BJ (cell line): ENCODE measurements at regions of chr19 and their contacts with region 1.

Region 1: GRCh38 chr19:46030812-46031550 is 8.1 kb upstream of the PGLYRP1 start:
- DNase-seq: no peak
- H3K4me3 ChIP-seq: no peak overlapping the region
- H3K27me3 ChIP-seq: peaks cover 6% of the 10 kb centered on the region; the same call in 1 of the 2 replicates
- CTCF ChIP-seq: no peak

Region 2: GRCh38 chr19:46056536-46056935 is 25.6 kb after region 1 on chr19:
- CTCF ChIA-PET with region 1: interaction called, 26 read pairs
- POLR2A ChIA-PET with region 1: no interaction called
- DNase-seq: no peak
- H3K4me3 ChIP-seq: no peak overlapping the region
- H3K27me3 ChIP-seq: peaks cover 7% of the 10 kb centered on the region
- CTCF ChIP-seq: no peak

Region 3: DNA sequence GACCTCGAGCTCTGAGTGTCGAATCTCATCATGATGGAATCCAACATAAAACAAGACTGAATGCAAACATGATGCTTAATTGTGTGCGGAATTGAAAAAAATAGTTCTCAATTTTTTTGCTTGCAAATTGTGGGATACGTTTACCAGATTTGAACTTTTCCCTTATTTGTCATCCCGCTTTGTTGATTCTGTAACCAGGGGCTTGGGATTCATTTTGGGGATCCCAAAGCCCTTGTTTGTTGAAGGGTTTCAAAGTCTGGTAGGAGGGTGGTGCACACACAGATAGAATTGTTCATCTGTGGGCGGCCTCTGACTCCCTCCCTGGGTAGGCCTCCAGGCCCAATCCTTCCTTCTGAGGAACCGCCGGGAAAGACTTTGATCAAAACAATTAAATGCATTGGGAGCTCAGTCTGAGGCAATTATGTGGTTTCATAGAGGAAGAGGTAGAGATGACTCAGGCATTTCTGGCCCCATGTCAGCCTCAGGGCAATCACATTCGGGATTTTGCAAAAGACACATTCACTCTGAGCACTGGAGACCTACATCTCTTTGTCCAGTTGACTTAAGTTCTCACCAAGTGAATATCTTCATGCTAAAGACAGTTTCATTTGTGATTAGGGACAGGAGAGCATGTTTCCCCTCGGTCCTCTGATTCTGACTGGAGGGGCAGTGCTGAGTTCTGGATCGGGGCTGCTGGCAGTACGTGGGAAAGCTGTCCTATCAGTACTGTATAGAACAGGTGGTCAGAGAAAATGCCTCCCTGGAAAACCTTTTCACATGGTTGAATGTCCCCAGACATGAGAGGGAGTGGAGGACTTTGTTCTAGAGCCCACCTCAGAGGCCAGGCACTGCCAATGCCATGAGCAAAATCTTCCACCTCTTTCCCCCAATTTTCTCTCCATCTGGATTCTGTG is 37.6 kb after region 1 on chr19:
- CTCF ChIA-PET with region 1: interaction called, 47 read pairs
- POLR2A ChIA-PET with region 1: no interaction called
- DNase-seq: peak; percentile 83
- H3K4me3 ChIP-seq: no peak overlapping the region
- H3K27me3 ChIP-seq: peaks cover 6% of the 10 kb centered on the region
- CTCF ChIP-seq: no peak

Region 4: GRCh38 chr19:46265217-46265828 is 234.3 kb after region 1 on chr19:
- CTCF ChIA-PET with region 1: interaction called, 84 read pairs
- POLR2A ChIA-PET with region 1: no interaction called
- DNase-seq: peak; percentile 34
- H3K4me3 ChIP-seq: no peak overlapping the region
- H3K27me3 ChIP-seq: peaks cover 10% of the 10 kb centered on the region
- CTCF ChIP-seq: peak; percentile 82

Region 5: GRCh38 chr19:46287585-46287984 is 256.6 kb after region 1 on chr19:
- CTCF ChIA-PET with region 1: no interaction called
- POLR2A ChIA-PET with region 1: no interaction called
- DNase-seq: no peak
- H3K4me3 ChIP-seq: no peak overlapping the region
- H3K27me3 ChIP-seq: no peaks in the 10 kb centered on the region
- CTCF ChIP-seq: no peak